CD4-positive, alpha-beta T cell (primary cell): ENCODE measurements at regions of chr19 and their contacts with region 1.

Region 1: DNA sequence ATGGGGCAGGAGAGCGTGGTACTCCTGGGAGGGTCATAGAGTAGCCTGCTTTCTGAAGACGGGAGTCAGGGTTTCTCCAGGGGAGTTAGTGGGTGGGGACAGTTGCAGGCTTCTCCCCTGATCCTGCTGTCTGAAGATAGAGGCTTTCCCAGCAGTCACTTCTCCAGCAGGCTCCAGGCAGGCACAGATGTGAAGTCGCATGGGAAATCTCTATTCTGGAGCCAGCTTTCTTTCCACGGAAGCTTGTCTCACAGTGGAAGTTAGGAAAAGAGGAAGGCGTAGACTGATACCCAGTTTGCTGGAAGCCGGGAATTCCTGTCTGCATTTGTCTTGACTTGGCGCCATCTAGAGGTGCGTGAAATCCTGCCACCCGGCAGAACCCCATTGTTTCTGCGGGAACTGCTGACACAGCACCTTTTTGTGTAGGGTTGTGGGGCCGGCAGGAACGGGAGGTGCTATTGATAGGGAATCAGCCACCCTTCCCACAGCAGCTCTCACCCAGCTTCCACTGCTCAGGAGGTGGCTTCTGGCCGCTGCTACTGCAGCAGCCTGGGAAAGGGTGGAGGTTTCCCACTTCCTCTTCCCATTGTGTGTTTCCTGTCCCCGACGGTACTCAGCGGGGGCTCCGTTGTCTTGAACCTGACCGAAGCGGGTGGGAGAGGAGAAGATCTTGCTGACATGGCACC is 28.5 kb upstream of the NPAS1 start:
- DNase-seq: peak; percentile 27 to 80 (median 50)
- ATAC-seq: peak; percentile 63
- H3K4me3 ChIP-seq: no peak overlapping the region
- H3K4me3 Mint-ChIP-seq: no peak overlapping the region
- H3K27ac ChIP-seq: no peak overlapping the region
- H3K27ac Mint-ChIP-seq: no peak overlapping the region
- H3K4me1 ChIP-seq: peaks cover 16% of the 10 kb centered on the region
- H3K4me1 Mint-ChIP-seq: peaks cover 12% of the 10 kb centered on the region
- H3K27me3 ChIP-seq: no peaks in the 10 kb centered on the region
- H3K27me3 Mint-ChIP-seq: no peaks in the 10 kb centered on the region
- CTCF ChIP-seq: peak; percentile 74

Region 2: DNA sequence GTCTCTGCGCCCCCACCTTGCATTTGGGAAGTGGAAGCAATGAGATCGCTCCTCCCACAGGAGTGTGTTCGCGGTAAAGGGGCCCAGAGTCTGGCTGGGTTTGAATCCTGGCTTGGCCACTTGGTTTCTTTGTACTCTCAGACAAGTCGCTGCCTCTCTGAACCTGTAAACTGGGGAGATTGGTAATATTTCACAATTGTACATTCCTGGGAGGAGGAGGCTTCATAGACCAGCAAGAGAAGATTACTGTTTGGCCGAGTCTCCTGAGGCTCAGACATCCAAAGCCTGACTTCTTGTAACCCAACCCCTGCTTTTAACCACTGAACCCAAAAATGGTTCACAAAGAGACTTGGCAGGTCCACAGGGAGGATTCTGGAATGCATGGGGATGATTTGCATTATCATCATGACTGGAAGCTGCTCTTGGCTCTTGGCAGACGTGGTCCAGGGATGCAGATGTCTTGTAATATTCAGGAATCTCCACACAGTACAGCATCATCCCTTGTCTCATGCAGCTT is 231.3 kb before region 1 on chr19:
- CTCF ChIA-PET with region 1: no interaction called
- POLR2A ChIA-PET with region 1: no interaction called
- intact Hi-C with region 1: loop called in 1 of 2 experiments (anchors 5 kb)
- DNase-seq: no peak
- ATAC-seq: no peak
- H3K4me3 ChIP-seq: no peak overlapping the region
- H3K4me3 Mint-ChIP-seq: no peak overlapping the region
- H3K27ac ChIP-seq: no peak overlapping the region
- H3K27ac Mint-ChIP-seq: no peak overlapping the region
- H3K4me1 ChIP-seq: peaks cover 11% of the 10 kb centered on the region
- H3K4me1 Mint-ChIP-seq: peaks cover 4% of the 10 kb centered on the region
- H3K27me3 ChIP-seq: no peaks in the 10 kb centered on the region
- H3K27me3 Mint-ChIP-seq: no peaks in the 10 kb centered on the region
- CTCF ChIP-seq: no peak

Region 3: DNA sequence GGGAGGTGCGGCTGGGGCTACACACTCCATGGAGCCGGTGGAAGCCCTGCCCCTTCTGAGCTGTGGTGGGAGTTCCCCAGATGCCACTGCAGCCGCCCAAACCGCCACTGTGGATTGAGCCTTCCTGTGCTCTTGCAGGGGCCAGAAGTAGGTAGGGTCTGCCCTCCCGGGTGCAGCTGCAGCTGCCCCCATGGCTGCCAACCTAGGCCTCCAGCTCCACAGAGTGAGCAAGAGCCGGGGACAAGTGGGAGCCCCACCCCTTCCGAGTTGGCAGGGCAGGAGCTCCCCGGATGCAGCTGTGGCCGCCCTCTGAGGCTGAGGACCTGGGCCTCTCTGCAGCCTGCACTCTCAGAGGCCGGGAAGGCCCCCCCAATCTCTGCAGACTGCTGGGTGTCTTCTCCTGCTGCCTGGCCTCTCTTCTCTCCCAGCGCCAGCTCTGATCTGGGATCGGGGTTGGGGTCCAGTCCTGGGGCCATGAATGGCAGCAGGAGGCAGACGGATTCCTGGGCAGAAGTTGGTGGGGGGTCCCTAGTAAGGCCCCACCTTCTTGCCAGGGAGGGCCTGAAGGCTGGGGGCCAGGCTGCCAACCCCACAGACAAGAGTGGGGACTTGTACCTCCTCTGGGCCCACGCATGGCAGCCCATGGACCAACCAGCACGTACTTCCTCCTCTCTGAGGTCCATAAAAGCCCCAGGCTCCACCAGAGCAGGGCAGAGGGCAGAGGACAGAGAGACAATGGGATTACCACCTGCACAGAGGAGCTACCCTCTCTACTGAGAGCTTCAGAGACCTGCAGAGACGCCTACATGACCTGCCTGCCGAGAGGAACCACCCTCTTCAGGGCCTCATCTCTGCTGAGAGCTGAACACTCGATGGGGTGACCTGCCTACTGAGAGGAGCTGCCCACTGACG is 169.4 kb before region 1 on chr19:
- CTCF ChIA-PET with region 1: no interaction called
- POLR2A ChIA-PET with region 1: no interaction called
- intact Hi-C with region 1: no loop called
- DNase-seq: peak; percentile 33 to 83 (median 52)
- ATAC-seq: peak; percentile 91
- H3K4me3 ChIP-seq: peak overlapping the region; percentile 13
- H3K4me3 Mint-ChIP-seq: peak overlapping the region; percentile 30
- H3K27ac ChIP-seq: peak overlapping the region; percentile 51 to 74
- H3K27ac Mint-ChIP-seq: peak overlapping the region; percentile 83
- H3K4me1 ChIP-seq: peaks cover 35% of the 10 kb centered on the region
- H3K4me1 Mint-ChIP-seq: peaks cover 26% of the 10 kb centered on the region
- H3K27me3 ChIP-seq: no peaks in the 10 kb centered on the region
- H3K27me3 Mint-ChIP-seq: no peaks in the 10 kb centered on the region
- CTCF ChIP-seq: no peak

Region 4: DNA sequence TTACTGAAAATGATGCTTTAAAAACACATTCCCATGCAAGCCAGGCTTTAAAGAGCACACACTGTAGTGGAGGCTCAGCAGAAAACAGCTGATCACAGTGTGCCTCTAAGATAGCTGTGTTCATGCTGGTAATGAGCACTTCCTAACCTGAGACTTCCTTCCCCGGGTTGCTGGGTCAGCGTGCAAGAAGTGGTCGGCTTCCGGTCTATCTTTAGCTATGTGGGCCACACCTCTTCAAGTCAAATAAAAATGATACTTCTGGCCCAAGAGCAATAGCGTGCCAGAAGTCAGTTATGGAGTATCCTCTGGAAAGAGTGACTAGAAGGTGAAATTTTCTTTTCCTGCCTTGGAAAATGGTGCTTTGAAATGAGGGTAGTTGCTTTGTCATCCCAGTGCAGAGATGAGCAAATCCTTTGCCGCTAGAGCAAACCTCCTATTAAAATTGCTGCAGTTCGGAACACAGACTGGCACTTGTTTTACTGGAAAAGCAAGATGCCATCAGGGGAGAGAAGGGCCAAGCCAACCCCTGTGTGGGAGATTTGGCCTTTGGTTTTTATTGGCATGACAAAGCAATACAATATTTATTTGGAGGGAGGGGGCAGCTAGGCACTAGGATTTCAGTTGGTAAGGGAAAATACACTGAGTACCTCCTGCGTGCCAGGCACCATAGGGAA is 66.1 kb before region 1 on chr19:
- CTCF ChIA-PET with region 1: interaction called, 4 read pairs
- POLR2A ChIA-PET with region 1: no interaction called
- intact Hi-C with region 1: loop called in 1 of 2 experiments (anchors 5 kb)
- DNase-seq: peak in 4 of 14 experiments; percentile 4 to 51 (median 24)
- ATAC-seq: peak; percentile 44
- H3K4me3 ChIP-seq: no peak overlapping the region
- H3K4me3 Mint-ChIP-seq: peak overlapping the region; percentile 32
- H3K27ac ChIP-seq: no peak overlapping the region
- H3K27ac Mint-ChIP-seq: peak overlapping the region; percentile 10
- H3K4me1 ChIP-seq: peaks cover 33% of the 10 kb centered on the region
- H3K4me1 Mint-ChIP-seq: peaks cover 52% of the 10 kb centered on the region
- H3K27me3 ChIP-seq: no peaks in the 10 kb centered on the region
- H3K27me3 Mint-ChIP-seq: no peaks in the 10 kb centered on the region
- CTCF ChIP-seq: no peak

Region 5: DNA sequence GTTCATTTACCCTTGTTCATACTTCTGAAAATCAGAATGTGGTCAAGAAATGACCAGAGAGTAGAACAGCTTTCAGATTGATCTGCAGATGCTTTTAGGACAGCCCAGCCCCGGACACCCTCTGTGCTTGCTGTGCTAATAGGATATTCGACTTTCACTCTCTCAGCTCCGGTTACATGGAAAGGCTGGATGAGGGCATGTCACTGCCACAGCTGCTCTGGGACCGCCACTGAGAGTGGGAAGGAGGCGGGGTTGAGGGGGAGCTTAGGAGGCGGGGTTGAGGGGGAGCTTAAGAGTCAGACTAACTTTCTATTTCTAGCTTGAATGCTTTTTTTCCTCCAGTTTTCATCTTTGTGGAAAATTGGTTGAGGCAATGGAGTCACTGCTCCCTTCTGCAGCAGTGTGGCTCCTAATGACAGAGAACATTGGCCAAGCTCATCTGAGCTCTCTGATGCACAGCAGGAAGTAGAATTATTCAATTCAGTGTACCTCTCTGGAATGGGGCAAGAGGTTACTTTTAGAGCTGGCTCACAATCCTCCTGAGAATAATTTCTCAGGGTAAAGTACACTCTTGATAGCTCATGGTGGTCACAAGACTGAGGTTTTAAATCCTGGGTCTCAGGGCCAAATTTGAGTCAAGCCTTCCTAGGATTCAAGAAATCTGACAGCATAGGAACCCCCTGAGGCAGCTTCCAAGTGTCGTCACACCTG is 46.1 kb before region 1 on chr19:
- CTCF ChIA-PET with region 1: no interaction called
- POLR2A ChIA-PET with region 1: no interaction called
- intact Hi-C with region 1: no loop called
- DNase-seq: no peak
- ATAC-seq: no peak
- H3K4me3 ChIP-seq: no peak overlapping the region
- H3K4me3 Mint-ChIP-seq: no peak overlapping the region
- H3K27ac ChIP-seq: no peak overlapping the region
- H3K27ac Mint-ChIP-seq: no peak overlapping the region
- H3K4me1 ChIP-seq: peaks cover 48% of the 10 kb centered on the region
- H3K4me1 Mint-ChIP-seq: peaks cover 31% of the 10 kb centered on the region
- H3K27me3 ChIP-seq: no peaks in the 10 kb centered on the region
- H3K27me3 Mint-ChIP-seq: no peaks in the 10 kb centered on the region
- CTCF ChIP-seq: no peak